ENCODE measurements at regions of chr13 and their contacts with region 1.

Region 1: DNA sequence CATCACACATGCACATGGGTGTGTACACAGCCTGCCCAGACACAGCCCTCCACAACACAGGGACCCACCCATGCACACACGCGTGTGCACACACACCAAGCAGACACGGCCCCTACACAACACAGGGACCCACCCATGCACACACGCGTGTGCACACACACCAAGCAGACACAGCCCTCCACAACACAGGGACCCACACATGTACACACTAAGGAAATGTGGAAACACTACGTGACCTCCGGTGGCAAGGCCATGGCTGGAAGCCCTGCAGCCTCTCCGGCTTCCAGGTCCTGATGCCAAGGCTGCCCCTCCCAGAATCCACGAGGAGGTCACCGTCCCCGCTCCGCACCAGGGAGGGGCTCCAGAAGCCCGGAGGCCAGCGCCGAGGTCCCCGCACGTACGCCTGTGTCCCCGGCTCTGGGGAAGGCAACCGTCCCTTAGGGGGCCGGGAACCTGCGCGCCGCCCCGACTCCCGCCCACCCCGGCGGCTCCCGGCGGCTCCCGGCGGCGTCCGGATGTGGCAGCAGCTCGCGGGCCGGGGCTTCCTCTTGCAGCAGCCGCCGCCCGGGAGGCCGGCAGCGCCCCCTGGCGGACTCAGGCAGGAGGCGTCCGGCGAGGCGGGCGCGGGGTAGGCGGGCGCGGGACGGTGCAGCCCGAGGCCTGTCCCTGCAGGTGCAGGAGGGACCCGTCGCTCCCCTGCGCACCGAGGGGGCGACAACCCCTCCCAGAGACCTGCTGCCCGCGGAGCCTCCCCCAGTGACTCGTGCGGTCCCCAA is 29.8 kb upstream of the GRTP1 start:
- DNase-seq: peak; percentile 72 to 87
- H3K4me3 ChIP-seq: peak overlapping the region; percentile 71
- H3K4me1 ChIP-seq: peaks cover 4% of the 10 kb centered on the region
- H3K27me3 ChIP-seq: no peaks in the 10 kb centered on the region

Region 2: GRCh38 chr13:112942689-112943308 is 451.0 kb before region 1 on chr13:
- in situ Hi-C with region 1: loop called (anchors 25 kb)
- DNase-seq: peak; percentile 95 to 100
- H3K4me3 ChIP-seq: peak overlapping the region; percentile 40
- H3K4me1 ChIP-seq: peaks cover 3% of the 10 kb centered on the region
- H3K27me3 ChIP-seq: no peaks in the 10 kb centered on the region